H1 (cell line): ENCODE measurements at regions of chr4 and their contacts with region 1.

Region 1: GRCh38 chr4:176256921-176257320 is 12.1 kb downstream of the ASB5 start:
- DNase-seq: no peak
- H3K4me3 ChIP-seq: no peak overlapping the region
- H3K27ac ChIP-seq: no peak overlapping the region
- H3K4me1 ChIP-seq: no peaks in the 10 kb centered on the region
- H3K27me3 ChIP-seq: no peaks in the 10 kb centered on the region
- CTCF ChIP-seq: no peak
- EP300 ChIP-seq: no peak
- POLR2A ChIP-seq: no peak
- RAD21 ChIP-seq: no peak

Region 2: GRCh38 chr4:176277162-176277904 is 20.4 kb after region 1 on chr4:
- CTCF ChIA-PET with region 1: interaction called, 11 read pairs
- POLR2A ChIA-PET with region 1: no interaction called
- DNase-seq: peak in 1 of 2 experiments; percentile 17
- H3K4me3 ChIP-seq: no peak overlapping the region
- H3K27ac ChIP-seq: no peak overlapping the region
- H3K4me1 ChIP-seq: peaks cover 0 to 5% (median 2%) of the 10 kb centered on the region in 4 experiments; a peak in 3 of 7 replicates
- H3K27me3 ChIP-seq: no peaks in the 10 kb centered on the region
- CTCF ChIP-seq: peak; percentile 30 to 55 (median 47)
- EP300 ChIP-seq: no peak
- POLR2A ChIP-seq: no peak
- RAD21 ChIP-seq: peak; percentile 59 to 63